ENCODE measurements at regions of chr6 and their contacts with region 1.

Region 1: GRCh38 chr6:116229287-116229913 is 24.5 kb downstream of the TSPYL4 start:
- DNase-seq: peak; percentile 93 to 99 (median 98)

Region 2: DNA sequence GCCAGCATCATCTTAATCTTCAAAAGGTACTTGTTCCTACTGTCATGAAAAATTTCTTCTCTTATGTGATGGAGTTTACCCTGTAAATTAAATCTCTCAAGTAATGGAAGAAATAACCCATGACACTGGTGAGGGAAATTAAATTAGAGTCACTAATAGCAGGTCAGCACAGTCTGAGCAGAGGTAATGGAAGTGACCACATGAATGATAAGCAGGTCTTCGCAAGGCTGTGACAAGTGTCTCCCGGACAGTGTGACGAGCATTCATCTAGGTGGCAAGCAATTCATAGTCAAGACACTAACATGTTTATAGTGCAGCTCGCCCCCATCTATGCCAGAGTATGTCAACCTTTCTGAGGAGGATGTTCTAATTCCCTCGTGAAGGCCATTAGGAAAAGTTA is 417.9 kb before region 1 on chr6:
- intact Hi-C with region 1: no loop called
- DNase-seq: no peak

Region 3: GRCh38 chr6:116253505-116254296 is 24.3 kb after region 1 on chr6 and contains the start of gene TSPYL4:
- intact Hi-C with region 1: loop called (anchors 1 kb)
- DNase-seq: peak; percentile 87 to 99 (median 94)

Region 4: DNA sequence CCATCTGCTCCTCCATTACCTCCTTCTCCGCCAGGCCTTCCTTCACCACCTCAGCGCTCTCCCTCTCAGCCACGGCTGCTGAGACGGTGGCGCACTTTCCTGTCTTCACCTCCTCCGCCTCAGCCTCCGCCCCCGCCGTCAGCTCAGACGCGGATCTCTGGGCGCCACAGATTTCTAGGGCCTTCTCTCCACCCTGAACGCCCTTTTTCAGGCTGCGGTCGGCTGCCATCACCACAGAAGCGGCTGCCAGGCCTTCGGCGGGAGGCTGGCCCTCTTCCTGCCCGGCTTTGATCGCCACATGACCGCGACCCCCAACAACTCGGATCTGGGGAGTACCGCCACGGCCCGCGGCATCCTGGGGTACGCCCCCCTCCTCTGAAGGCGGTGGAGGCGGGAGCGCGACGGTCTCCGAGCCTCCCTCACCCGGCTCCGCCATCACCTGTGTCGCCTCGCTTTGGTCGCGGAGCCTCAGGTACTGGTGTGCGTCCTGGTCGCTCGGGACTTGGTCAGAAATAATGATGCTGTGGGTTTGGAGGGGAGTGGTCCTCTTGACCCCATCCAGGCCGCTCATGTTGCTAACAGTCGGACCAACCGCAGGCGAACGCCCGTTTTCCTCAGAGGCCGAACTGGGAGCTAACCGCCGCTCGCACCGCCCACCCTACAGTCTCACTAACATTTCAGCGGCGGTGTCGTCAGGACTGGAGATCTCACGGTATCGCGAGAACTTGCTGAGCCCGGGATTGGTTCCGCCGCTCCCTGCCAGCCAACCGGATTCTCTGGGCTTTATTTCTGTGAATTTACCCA is 50.1 kb after region 1 on chr6 and contains the start of gene TSPYL1:
- intact Hi-C with region 1: no loop called
- DNase-seq: peak; percentile 90 to 99 (median 96)